Activated CD4-positive, alpha-beta T cell treated with anti-CD3 and anti-CD28 coated beads for 36 hours (primary cell): ENCODE measurements at regions of chr15 and their contacts with region 1.

Region 1: DNA sequence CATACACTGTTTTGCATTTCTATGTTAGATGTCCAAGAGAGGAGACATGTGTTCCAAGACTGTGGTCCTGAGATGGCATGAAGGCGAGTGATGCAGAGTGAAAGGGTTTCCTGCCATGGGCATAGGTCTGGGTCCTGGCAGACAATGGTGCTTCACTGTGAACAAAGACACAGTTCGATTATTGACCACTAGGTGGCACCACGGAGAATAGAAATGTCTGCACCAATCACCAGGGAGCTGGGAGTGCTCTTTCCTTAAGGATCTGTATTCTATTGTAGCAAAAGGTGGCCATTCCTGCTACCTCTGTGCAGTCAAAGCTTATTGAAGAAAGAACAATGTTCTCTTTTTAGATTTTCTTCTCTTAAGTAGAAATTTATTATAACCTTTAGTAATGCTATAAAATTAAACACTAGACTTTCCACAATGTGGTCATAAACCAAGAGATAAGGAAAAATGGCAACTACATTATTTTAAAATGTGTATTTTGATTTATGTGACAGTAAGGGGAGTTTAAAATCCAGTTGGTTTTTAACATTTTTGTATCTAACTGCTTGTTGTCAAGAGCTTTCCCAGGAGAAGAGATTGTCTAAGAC is 88.7 kb downstream of the GABRG3 start:
- DNase-seq: peak; percentile 51
- ATAC-seq: no peak
- H3K4me3 Mint-ChIP-seq: no peak overlapping the region
- H3K27ac Mint-ChIP-seq: no peak overlapping the region
- H3K4me1 Mint-ChIP-seq: no peaks in the 10 kb centered on the region
- H3K27me3 Mint-ChIP-seq: no peaks in the 10 kb centered on the region

Region 2: GRCh38 chr15:26891448-26892181 is 168.1 kb before region 1 on chr15:
- CTCF ChIA-PET with region 1: no interaction called
- POLR2A ChIA-PET with region 1: no interaction called
- intact Hi-C with region 1: loop called in 1 of 2 experiments (anchors 5 kb)
- DNase-seq: peak; percentile 79
- ATAC-seq: peak; percentile 55
- H3K4me3 Mint-ChIP-seq: no peak overlapping the region
- H3K27ac Mint-ChIP-seq: no peak overlapping the region
- H3K4me1 Mint-ChIP-seq: no peaks in the 10 kb centered on the region
- H3K27me3 Mint-ChIP-seq: peaks cover 14% of the 10 kb centered on the region

Region 3: DNA sequence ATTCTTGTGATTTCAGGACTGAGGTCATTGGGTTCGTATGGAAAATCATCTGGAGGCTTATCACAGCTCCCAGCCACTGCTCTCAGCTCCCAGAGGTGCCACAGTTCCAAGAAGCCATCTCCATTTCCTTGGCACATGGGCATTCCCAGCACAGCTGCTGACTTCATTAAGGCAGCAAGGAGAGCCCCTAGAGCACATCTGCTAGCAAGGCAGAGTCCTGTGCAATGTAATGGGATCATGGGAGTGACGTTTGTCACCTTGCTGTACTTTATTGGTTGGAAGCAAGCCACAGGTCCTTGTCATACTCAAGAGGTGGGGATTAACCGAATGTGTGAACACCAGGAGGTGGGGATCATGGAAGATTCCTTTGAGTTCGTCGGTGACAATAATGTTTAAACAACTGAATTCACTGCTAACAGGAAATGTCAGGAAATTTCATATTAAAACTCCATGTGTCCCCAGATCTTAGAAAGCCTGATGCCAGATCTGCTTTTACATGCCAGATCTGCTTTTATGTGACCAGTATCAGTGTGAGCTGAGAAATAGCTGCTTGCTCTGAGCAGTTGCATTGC is 60.1 kb after region 1 on chr15:
- CTCF ChIA-PET with region 1: no interaction called
- POLR2A ChIA-PET with region 1: no interaction called
- intact Hi-C with region 1: loop called in 1 of 2 experiments (anchors 10 kb)
- DNase-seq: no peak
- ATAC-seq: no peak
- H3K4me3 Mint-ChIP-seq: no peak overlapping the region
- H3K27ac Mint-ChIP-seq: no peak overlapping the region
- H3K4me1 Mint-ChIP-seq: no peaks in the 10 kb centered on the region
- H3K27me3 Mint-ChIP-seq: no peaks in the 10 kb centered on the region

Region 4: GRCh38 chr15:27358751-27359434 is 299.2 kb after region 1 on chr15:
- CTCF ChIA-PET with region 1: interaction called, 3 read pairs
- POLR2A ChIA-PET with region 1: no interaction called
- intact Hi-C with region 1: loop called in 1 of 2 experiments (anchors 2 kb)
- DNase-seq: peak; percentile 37
- ATAC-seq: no peak
- H3K4me3 Mint-ChIP-seq: no peak overlapping the region
- H3K27ac Mint-ChIP-seq: no peak overlapping the region
- H3K4me1 Mint-ChIP-seq: no peaks in the 10 kb centered on the region
- H3K27me3 Mint-ChIP-seq: no peaks in the 10 kb centered on the region